Natural killer cell (primary cell): ENCODE measurements at regions of chr14 and their contacts with region 1.

Region 1: GRCh38 chr14:65958664-65959562 is 527.3 kb upstream of the CCDC196 start:
- DNase-seq: peak in 1 of 2 donors; percentile 71
- ATAC-seq: peak in 2 of 3 donors; percentile 46 to 72
- H3K4me3 ChIP-seq: no peak overlapping the region
- H3K4me3 Mint-ChIP-seq: no peak overlapping the region
- H3K27ac ChIP-seq: no peak overlapping the region
- H3K27ac Mint-ChIP-seq: no peak overlapping the region
- H3K4me1 ChIP-seq: peaks cover 5% of the 10 kb centered on the region
- H3K4me1 Mint-ChIP-seq: peaks cover 8 to 16% of the 10 kb centered on the region in 2 donors
- H3K27me3 ChIP-seq: no peaks in the 10 kb centered on the region
- H3K27me3 Mint-ChIP-seq: peaks cover 3 to 12% of the 10 kb centered on the region in 2 donors
- CTCF ChIP-seq: peak; percentile 76

Region 2: DNA sequence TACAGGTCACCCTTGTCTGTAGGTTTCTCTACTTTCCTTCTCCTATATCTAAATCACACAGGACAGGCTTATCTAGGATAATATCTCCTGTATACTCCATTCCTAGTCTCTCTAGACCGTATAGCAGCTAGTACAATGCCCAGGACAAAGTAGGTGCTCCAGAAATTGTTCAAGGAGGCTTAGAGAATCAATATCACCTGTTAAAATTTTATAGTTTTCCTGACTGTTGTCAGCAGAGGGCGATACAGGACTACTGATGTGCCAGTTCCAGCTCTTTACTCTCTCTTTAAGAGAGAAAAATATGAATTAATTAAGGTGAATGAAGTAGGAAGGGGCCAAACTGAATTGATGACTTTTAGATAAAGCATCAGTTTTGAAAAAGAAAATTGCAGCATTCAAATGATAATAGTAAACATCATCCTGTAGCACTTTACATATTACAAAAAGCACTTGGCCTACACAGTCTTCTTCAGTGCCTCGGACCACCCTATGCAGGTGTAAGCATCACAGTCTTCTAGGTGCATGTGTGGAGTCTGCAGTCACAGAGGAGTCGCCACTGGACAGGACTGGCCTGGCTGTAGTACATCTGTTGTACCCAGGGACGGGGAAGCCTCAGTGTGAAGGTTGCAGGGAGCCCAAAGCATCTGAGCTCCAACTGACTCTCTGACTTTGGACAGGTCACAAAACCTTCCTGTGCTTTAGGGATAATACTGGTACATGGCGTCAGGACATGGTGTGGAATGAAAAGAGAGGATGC is 794.7 kb before region 1 on chr14:
- intact Hi-C with region 1: loop called (anchors 1 kb)
- DNase-seq: peak in 1 of 2 donors; percentile 79
- ATAC-seq: peak in 2 of 3 donors; percentile 35 to 42
- H3K4me3 ChIP-seq: no peak overlapping the region
- H3K4me3 Mint-ChIP-seq: no peak overlapping the region
- H3K27ac ChIP-seq: no peak overlapping the region
- H3K27ac Mint-ChIP-seq: no peak overlapping the region
- H3K4me1 ChIP-seq: peaks cover 4% of the 10 kb centered on the region
- H3K4me1 Mint-ChIP-seq: no peaks in the 10 kb centered on the region
- H3K27me3 ChIP-seq: no peaks in the 10 kb centered on the region
- H3K27me3 Mint-ChIP-seq: peaks cover 0 to 6% of the 10 kb centered on the region in 2 donors
- CTCF ChIP-seq: peak; percentile 59

Region 3: GRCh38 chr14:65222440-65222858 is 736.5 kb before region 1 on chr14:
- intact Hi-C with region 1: loop called (anchors 1 kb)
- DNase-seq: peak; percentile 17 to 76
- ATAC-seq: peak; percentile 66 to 80 (median 75)
- H3K4me3 ChIP-seq: no peak overlapping the region
- H3K4me3 Mint-ChIP-seq: no peak overlapping the region
- H3K27ac ChIP-seq: no peak overlapping the region
- H3K27ac Mint-ChIP-seq: no peak overlapping the region
- H3K4me1 ChIP-seq: peaks cover 17% of the 10 kb centered on the region
- H3K4me1 Mint-ChIP-seq: no peaks in the 10 kb centered on the region
- H3K27me3 ChIP-seq: no peaks in the 10 kb centered on the region
- H3K27me3 Mint-ChIP-seq: no peaks in the 10 kb centered on the region
- CTCF ChIP-seq: peak; percentile 88

Region 4: GRCh38 chr14:65412032-65412846 is 546.7 kb before region 1 on chr14 and contains the start of gene FUT8:
- intact Hi-C with region 1: loop called (anchors 1 kb)
- DNase-seq: peak; percentile 82 to 97
- ATAC-seq: peak; percentile 78 to 94 (median 83)
- H3K4me3 ChIP-seq: peak within 1 kb of the TSS; percentile 81
- H3K4me3 Mint-ChIP-seq: peak within 1 kb of the TSS; percentile 98
- H3K27ac ChIP-seq: peak within 1 kb of the TSS; percentile 68
- H3K27ac Mint-ChIP-seq: peak within 1 kb of the TSS; percentile 89 to 93
- H3K4me1 ChIP-seq: peaks cover 10% of the 10 kb centered on the region
- H3K4me1 Mint-ChIP-seq: peaks cover 14 to 22% of the 10 kb centered on the region in 2 donors
- H3K27me3 ChIP-seq: no peaks in the 10 kb centered on the region
- H3K27me3 Mint-ChIP-seq: peaks cover 0 to 2% of the 10 kb centered on the region in 2 donors
- CTCF ChIP-seq: peak; percentile 24
- total RNA-seq, gene FUT8: 20.7 to 29.2 (median 21.2) TPM

Region 5: GRCh38 chr14:65815127-65815526 is 143.8 kb before region 1 on chr14:
- intact Hi-C with region 1: loop called (anchors 5 kb)
- DNase-seq: peak in 1 of 2 donors; percentile 34
- ATAC-seq: no peak
- H3K4me3 ChIP-seq: no peak overlapping the region
- H3K4me3 Mint-ChIP-seq: no peak overlapping the region
- H3K27ac ChIP-seq: no peak overlapping the region
- H3K27ac Mint-ChIP-seq: no peak overlapping the region
- H3K4me1 ChIP-seq: no peaks in the 10 kb centered on the region
- H3K4me1 Mint-ChIP-seq: no peaks in the 10 kb centered on the region
- H3K27me3 ChIP-seq: no peaks in the 10 kb centered on the region
- H3K27me3 Mint-ChIP-seq: peaks cover 3 to 14% of the 10 kb centered on the region in 2 donors
- CTCF ChIP-seq: no peak

Region 6: GRCh38 chr14:66174453-66174891 is 215.6 kb after region 1 on chr14:
- intact Hi-C with region 1: no loop called
- DNase-seq: no peak
- ATAC-seq: no peak
- H3K4me3 ChIP-seq: no peak overlapping the region
- H3K4me3 Mint-ChIP-seq: no peak overlapping the region
- H3K27ac ChIP-seq: no peak overlapping the region
- H3K27ac Mint-ChIP-seq: no peak overlapping the region
- H3K4me1 ChIP-seq: no peaks in the 10 kb centered on the region
- H3K4me1 Mint-ChIP-seq: no peaks in the 10 kb centered on the region
- H3K27me3 ChIP-seq: no peaks in the 10 kb centered on the region
- H3K27me3 Mint-ChIP-seq: peaks cover 15 to 18% of the 10 kb centered on the region in 2 donors
- CTCF ChIP-seq: no peak